ENCODE measurements at regions of chr1 and their contacts with region 1.

Region 1: DNA sequence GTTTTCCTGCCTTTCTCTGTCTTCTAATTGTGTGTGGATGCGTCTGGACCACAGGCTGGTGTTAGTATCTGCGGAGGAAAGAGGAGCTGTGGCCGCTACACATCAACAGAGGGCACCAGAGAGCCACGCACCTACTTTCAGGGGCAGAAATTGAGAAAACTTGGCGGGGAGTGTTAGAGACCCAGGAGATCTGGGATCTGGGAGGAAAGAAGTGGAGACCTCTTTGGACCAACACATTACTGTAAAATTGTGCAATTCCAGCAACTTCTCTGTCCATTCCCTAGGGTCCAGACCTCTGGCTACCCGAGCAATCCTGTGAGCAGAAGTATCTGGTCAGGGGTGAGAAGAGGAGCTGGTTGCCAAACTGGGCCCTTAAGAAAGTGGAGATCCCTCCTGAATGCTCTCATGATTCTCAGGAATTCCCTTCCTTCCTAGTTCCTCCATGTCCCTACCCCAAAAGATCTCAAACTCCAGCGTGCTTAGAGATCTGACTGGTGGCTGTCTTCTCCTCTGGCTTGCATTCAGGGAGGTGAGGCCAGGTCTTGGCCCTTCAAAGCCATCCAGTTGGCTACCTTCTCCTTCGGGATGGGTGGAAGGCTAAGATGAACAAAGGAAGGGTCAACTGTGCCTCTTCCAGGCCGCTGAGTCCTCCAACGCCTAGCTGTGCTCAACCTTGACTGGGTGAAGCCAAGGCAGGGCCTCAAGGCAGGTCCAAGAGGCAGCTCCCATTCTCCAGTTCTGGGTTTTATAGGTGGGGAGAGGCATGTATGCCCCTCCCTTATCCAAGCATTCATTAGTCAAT is 1.2 kb upstream of the KIRREL1 start:
- DNase-seq: peak; percentile 58 to 80 (median 73)
- ATAC-seq: peak; percentile 62 to 78 (median 72)
- H3K4me3 ChIP-seq: peak overlapping the region in 3 of 12 donors; percentile 6 to 98 (median 97)
- H3K27ac ChIP-seq: peak overlapping the region in 10 of 12 donors; percentile 40 to 95 (median 60)
- H3K4me1 ChIP-seq: peaks cover 0 to 29% (median 11%) of the 10 kb centered on the region in 12 donors
- H3K27me3 ChIP-seq: peaks cover 0 to 19% (median 0%) of the 10 kb centered on the region in 9 donors
- CTCF ChIP-seq: peak; percentile 85 to 98 (median 96)
- POLR2A ChIP-seq: no peak

Region 2: DNA sequence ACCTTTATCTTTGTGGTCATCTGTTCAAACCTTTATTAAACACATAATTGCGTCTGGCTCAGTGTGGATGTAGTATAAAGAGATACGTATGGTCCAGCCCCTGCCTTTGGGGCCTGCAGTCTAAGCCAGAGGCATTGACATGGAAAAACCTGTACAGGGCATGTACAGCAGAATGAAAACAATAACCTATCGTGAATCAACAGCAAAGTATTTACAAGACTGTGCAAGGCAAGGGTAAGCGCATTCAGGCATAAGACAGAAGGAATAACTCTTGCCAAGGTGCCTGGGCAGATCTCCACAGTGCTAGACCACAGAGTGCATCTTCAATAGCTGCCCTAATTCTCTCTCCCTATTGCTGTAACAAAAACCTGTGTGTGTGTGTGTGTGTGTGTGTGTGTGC is 36.7 kb after region 1 on chr1:
- intact Hi-C with region 1: loop called in 3 of 10 experiments (anchors 2 to 5 kb)
- DNase-seq: no peak
- ATAC-seq: no peak
- H3K4me3 ChIP-seq: no peak overlapping the region
- H3K27ac ChIP-seq: no peak overlapping the region
- H3K4me1 ChIP-seq: peaks cover 0 to 35% (median 21%) of the 10 kb centered on the region in 12 donors
- H3K27me3 ChIP-seq: no peaks in the 10 kb centered on the region
- CTCF ChIP-seq: no peak
- POLR2A ChIP-seq: no peak

Region 3: GRCh38 chr1:158035976-158036583 is 43.8 kb after region 1 on chr1:
- intact Hi-C with region 1: loop called in 9 of 10 experiments (anchors 1 to 5 kb)
- DNase-seq: peak in 2 of 5 donors; percentile 35 to 51
- ATAC-seq: peak in 2 of 4 donors; percentile 40 to 52
- H3K4me3 ChIP-seq: no peak overlapping the region
- H3K27ac ChIP-seq: no peak overlapping the region
- H3K4me1 ChIP-seq: peaks cover 0 to 47% (median 18%) of the 10 kb centered on the region in 12 donors
- H3K27me3 ChIP-seq: no peaks in the 10 kb centered on the region
- CTCF ChIP-seq: peak; percentile 63 to 83 (median 76)
- POLR2A ChIP-seq: no peak

Region 4: DNA sequence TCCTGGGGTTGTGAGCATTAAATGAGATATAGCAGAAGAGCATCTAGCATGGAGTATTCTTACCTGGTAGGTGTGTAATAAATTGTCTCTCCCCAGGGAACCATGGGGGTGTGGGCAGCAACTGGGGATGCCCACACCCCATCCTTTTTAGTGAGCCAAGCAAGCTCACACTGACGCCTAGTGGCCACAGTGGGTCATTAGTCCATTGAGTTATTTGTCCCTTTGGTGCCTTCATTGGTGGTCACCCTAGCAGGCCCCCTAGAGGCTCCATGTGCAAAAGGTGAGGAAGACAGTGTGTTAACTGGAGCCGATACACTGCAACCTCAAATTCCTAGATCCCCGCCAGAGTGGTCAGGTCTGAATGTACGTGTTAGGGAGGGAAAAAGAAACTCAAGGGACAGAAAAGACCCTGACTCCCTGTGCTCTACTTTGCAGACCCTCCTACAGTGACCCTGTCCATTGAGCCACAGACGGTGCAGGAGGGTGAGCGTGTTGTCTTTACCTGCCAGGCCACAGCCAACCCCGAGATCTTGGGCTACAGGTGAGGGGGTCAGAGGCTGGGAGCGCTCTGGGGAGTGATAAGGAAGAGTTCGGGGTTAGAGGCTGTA is 95.2 kb after region 1 on chr1:
- intact Hi-C with region 1: loop called (anchors 1 to 10 kb)
- DNase-seq: peak in 4 of 5 donors; percentile 50 to 57 (median 52)
- ATAC-seq: peak; percentile 41 to 70 (median 62)
- H3K4me3 ChIP-seq: no peak overlapping the region
- H3K27ac ChIP-seq: no peak overlapping the region
- H3K4me1 ChIP-seq: no peaks in the 10 kb centered on the region
- H3K27me3 ChIP-seq: no peaks in the 10 kb centered on the region
- CTCF ChIP-seq: peak; percentile 78 to 90 (median 84)
- POLR2A ChIP-seq: no peak

Region 5: DNA sequence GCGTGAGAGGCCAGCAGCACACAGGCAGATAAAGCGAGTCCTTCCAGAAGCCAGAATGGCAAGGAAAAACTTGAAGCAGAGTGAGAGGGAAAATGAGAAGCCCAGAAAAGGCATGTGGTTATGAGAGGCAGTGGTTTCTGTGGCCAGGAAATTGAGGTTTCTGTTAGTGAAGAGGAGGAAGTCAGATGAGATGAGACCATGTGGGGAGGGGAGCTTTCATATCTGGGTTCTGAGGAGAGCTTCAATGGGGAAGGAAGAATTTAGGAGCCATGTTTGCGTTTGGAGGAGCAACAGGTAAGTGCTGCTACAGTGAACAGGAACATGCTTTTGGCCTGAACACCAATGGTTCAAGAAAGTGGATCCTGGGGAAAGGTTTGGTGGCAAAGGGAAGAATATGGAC is 255.9 kb after region 1 on chr1:
- intact Hi-C with region 1: loop called in 1 of 10 experiments (anchors 5 kb)
- DNase-seq: peak in 2 of 5 donors; percentile 11 to 18
- ATAC-seq: peak in 3 of 4 donors; percentile 18 to 60 (median 56)
- H3K4me3 ChIP-seq: no peak overlapping the region
- H3K27ac ChIP-seq: peak overlapping the region in 1 of 12 donors; percentile 18
- H3K4me1 ChIP-seq: peaks cover 0 to 47% (median 4%) of the 10 kb centered on the region in 12 donors
- H3K27me3 ChIP-seq: peaks cover 0 to 3% (median 0%) of the 10 kb centered on the region in 9 donors
- CTCF ChIP-seq: no peak
- POLR2A ChIP-seq: no peak

Measured in heart left ventricle (tissue), 16 donors.